Activated T-helper 2 cell treated with anti-CD3 and anti-CD28 coated beads, Interferon-gamma antibody, Interleukin-2, Interleukin-4, amounts not matched to agents 10 μg/mL and 5 μg/mL and 100 μg/mL, durations not matched to agents 14 hours and 24 hours and 36 hours (primary cell): ENCODE measurements at regions of chr1 and their contacts with region 1.

Region 1: DNA sequence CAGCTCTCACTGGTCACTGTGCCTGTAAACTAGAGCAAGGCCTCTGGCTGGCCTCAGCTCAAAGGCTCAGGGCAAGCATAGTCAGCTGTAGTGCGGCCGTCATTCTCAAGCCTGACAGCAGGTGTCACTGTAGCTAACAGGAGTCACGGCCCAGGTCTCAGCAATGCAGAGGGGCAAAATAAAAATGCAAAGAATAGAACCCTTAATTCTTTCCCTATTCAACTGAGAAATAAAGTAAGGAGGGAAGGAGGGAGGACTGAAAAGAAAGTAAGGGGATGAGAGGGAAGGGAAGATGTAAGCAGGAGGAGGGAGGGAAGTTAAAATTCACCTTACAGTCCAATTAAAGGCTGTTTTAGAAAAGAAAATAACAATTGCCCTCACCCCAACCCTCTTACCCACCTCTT is 106.1 kb downstream of the KIAA0319L start:
- DNase-seq: peak; percentile 67
- H3K4me3 Mint-ChIP-seq: no peak overlapping the region
- H3K27ac Mint-ChIP-seq: no peak overlapping the region
- H3K4me1 Mint-ChIP-seq: peaks cover 19% of the 10 kb centered on the region
- H3K27me3 Mint-ChIP-seq: no peaks in the 10 kb centered on the region

Region 2: GRCh38 chr1:35202048-35202719 is 248.9 kb before region 1 on chr1:
- intact Hi-C with region 1: loop called (anchors 10 kb)
- DNase-seq: peak; percentile 61
- H3K4me3 Mint-ChIP-seq: no peak overlapping the region
- H3K27ac Mint-ChIP-seq: no peak overlapping the region
- H3K4me1 Mint-ChIP-seq: peaks cover 3% of the 10 kb centered on the region
- H3K27me3 Mint-ChIP-seq: peaks cover 14% of the 10 kb centered on the region

Region 3: GRCh38 chr1:35505908-35506798 is 55.0 kb after region 1 on chr1:
- intact Hi-C with region 1: loop called (anchors 2 kb)
- DNase-seq: peak; percentile 69
- H3K4me3 Mint-ChIP-seq: peak overlapping the region; percentile 66
- H3K27ac Mint-ChIP-seq: peak overlapping the region; percentile 86
- H3K4me1 Mint-ChIP-seq: peaks cover 71% of the 10 kb centered on the region
- H3K27me3 Mint-ChIP-seq: no peaks in the 10 kb centered on the region

Region 4: GRCh38 chr1:35544978-35545377 is 93.9 kb after region 1 on chr1:
- intact Hi-C with region 1: loop called (anchors 1 kb)
- DNase-seq: no peak
- H3K4me3 Mint-ChIP-seq: no peak overlapping the region
- H3K27ac Mint-ChIP-seq: no peak overlapping the region
- H3K4me1 Mint-ChIP-seq: peaks cover 25% of the 10 kb centered on the region
- H3K27me3 Mint-ChIP-seq: no peaks in the 10 kb centered on the region

Region 5: GRCh38 chr1:35564037-35564883 is 113.1 kb after region 1 on chr1:
- intact Hi-C with region 1: loop called (anchors 1 kb)
- DNase-seq: peak; percentile 71
- H3K4me3 Mint-ChIP-seq: no peak overlapping the region
- H3K27ac Mint-ChIP-seq: no peak overlapping the region
- H3K4me1 Mint-ChIP-seq: peaks cover 21% of the 10 kb centered on the region
- H3K27me3 Mint-ChIP-seq: no peaks in the 10 kb centered on the region

Region 6: GRCh38 chr1:35715568-35716002 is 264.5 kb after region 1 on chr1:
- intact Hi-C with region 1: loop called (anchors 10 kb)
- DNase-seq: peak; percentile 68
- H3K4me3 Mint-ChIP-seq: peak overlapping the region; percentile 57
- H3K27ac Mint-ChIP-seq: no peak overlapping the region
- H3K4me1 Mint-ChIP-seq: peaks cover 29% of the 10 kb centered on the region
- H3K27me3 Mint-ChIP-seq: no peaks in the 10 kb centered on the region

Region 7: DNA sequence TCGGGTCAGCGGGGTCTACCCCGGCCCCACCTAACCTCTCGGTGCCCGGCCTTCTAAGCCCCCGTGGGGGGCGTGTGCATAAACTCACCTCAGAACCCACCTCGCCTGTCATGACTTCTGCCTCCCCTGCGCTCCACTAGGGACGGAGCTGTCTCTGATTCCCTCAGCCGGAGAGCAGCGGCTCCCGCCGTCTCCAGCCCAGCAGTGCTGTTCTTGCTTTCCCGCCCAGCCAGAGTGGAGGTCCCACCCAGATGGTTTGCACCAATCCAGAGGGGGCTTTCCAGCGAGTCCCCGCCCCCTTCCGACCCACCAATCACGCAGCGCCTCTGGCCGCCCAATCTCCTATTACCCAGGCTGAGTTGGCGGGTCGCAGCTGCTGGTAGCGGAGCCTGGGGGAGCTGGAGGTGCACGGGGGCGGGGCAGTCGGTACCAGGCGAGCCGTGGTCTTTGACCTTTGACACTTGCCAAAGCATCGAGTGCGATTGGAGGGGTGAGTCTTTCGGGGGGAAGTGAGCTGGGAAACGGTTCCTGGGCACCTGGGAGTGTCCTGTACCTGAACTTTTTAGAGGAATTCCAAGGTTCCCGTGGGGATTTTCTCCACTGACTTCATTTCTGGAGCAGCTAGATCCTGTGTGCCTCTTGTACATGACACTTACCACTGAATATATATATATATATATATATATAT is 318.8 kb after region 1 on chr1 and contains the start of gene CLSPN:
- intact Hi-C with region 1: loop called (anchors 5 kb)
- DNase-seq: peak; percentile 96
- H3K4me3 Mint-ChIP-seq: peak within 1 kb of the TSS; percentile 100
- H3K27ac Mint-ChIP-seq: peak within 1 kb of the TSS; percentile 96
- H3K4me1 Mint-ChIP-seq: peaks cover 18% of the 10 kb centered on the region
- H3K27me3 Mint-ChIP-seq: no peaks in the 10 kb centered on the region
- total RNA-seq, gene CLSPN: 55.2 and 55.8 TPM in 2 replicates